ENCODE measurements at regions of chr22 and their contacts with region 1.

Region 1: DNA sequence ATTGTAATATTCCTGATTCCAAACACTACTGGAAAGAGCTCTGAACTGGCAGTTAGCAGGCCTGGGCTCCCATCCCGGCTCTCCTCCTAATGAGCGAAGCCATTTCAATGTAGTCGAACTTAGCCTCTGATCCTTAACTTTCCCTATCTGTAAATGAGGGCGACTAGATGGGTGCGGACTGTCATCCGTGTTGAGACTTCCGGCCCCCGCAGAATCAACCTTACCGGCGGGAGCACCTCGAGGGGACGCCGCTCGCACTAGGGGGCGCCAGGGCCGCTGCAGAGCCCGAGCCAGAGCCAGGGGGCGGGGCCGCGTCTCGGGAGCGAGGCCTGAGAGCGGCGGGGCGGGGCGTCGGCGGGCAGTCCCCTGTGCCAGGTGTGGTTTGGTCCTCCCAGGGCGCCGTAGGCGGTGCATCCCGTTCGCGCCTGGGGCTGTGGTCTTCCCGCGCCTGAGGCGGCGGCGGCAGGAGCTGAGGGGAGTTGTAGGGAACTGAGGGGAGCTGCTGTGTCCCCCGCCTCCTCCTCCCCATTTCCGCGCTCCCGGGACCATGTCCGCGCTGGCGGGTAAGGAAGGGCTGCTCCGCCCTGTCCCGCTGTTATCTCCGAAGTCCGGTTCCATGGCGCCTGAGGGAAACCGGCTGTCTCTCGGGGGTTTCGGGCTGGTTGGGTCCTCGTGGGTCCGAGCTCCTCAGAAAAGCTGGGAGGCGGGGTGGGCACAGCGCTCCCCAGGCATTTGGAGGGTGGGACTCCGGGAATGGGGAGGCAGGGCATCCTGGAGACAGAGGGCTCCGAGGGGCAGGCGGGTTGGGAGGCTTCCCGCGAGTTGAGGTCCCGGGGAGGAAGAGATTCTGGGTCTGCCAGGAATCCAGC is at the start of gene LIMK2:
- DNase-seq: peak; percentile 99
- total RNA-seq, gene LIMK2: 13.1 TPM

Region 2: DNA sequence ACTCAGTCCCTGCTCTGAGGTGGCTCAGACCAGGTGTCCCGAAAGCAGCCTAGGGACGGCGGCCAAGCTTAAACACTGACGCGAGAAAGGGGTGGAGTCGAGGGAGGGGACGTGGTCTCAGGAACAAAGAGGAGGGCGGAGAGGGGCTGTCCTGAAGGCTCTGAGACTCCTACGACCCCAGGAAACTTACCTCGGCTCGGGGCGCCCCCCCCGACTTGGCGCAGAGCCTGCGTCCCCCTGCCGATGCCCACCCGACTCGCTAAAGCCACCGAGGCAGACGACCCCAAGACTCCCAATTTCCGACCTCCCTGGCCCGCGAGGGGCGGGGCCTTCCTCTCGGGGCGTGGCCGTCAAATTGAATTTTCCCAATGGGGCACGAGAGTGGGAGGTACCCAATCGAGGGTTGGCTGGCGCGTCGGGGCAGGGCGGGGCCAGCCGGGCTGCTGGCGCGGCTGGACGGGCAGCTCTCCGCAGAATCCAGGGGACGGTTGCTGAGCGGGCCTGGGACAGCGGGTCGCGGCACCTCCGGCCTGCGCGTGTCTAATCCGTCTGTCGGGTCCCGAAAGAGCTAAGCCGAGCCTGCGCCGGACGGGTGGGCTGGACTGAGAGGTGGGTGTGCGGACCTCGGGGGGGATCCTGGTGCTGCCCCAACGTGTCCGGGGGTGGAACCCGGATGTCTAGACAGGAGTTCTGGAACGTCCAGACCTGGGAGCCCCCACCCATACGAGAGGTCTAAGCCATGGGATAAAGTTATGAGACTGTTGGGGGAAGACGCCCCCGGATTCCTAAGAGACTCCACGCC is 131.0 kb before region 1 on chr22 and contains the start of gene SMTN:
- intact Hi-C with region 1: loop called (anchors 5 kb)
- DNase-seq: peak; percentile 96
- total RNA-seq, gene SMTN: 128 TPM

Region 3: DNA sequence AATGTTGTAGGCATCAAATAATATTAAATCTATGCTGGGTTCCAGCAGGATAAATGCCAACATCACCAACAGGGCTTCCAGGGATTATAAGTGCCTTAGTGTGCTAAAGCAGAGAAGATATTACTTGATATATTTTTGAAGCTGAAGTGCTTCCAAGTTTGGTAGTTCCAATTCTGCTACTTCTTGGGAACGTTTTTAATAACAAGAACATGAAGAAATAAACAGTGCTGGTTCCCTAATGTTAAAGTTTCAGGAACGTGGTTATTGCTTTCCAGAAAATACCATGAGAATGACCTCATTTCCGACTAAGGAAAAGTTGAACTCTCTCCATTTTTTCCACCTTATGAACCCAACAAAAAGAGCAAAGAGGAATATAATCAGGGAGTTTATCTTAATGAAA is 56.7 kb before region 1 on chr22:
- intact Hi-C with region 1: loop called (anchors 5 kb)
- DNase-seq: no peak

Region 4: GRCh38 chr22:31230871-31231621 is 18.9 kb after region 1 on chr22:
- intact Hi-C with region 1: loop called (anchors 2 kb)
- DNase-seq: no peak

Region 5: DNA sequence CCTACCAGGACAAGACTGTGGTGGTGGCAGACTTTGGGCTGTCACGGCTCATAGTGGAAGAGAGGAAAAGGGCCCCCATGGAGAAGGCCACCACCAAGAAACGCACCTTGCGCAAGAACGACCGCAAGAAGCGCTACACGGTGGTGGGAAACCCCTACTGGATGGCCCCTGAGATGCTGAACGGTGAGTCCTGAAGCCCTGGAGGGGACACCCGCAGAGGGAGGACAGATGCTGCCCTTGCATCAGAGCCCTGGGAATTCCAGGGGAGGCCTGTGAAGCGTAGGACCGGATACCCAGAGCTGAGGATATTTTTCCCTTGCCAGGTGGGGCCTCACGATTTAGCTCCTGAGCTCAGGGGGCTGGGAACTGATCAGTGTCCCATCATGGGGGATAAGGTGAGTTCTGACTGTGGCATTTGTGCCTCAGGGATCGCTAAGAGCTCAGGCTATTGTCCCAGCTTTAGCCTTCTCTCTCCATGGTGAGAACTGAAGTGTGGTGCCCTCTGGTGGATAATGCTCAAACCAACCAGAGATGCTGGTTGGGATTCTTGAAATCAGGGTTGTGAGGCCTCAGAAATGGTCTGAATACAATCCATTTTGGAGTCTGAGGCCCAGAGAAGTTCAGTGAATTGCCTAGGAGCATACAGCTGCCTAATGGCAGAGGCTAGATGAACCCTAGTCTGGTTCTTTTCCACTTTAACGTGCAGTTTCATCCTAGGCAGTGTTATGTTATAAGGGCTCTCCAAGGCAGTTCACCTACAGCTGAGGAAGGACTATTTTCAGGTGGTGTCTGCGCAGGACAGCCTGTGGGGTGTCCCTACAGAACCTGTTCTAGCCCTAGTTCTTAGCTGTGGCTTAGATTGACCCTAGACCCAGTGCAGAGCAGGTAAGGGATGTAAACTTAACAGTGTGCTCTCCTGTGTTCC is 60.7 kb after region 1 on chr22:
- intact Hi-C with region 1: loop called (anchors 5 kb)
- DNase-seq: peak; percentile 74

Region 6: GRCh38 chr22:31290494-31291471 is 78.7 kb after region 1 on chr22:
- intact Hi-C with region 1: loop called (anchors 5 kb)
- DNase-seq: peak; percentile 98

Measured in cardiac septum (tissue), 1 donor.